Left ventricle myocardium superior (tissue), 1 donor: ENCODE measurements at regions of chr12 and their contacts with region 1.

Region 1: GRCh38 chr12:2034633-2035430 is 18.0 kb upstream of the CACNA1C start:
- DNase-seq: peak; percentile 96
- ATAC-seq: peak; percentile 76

Region 2: GRCh38 chr12:1804545-1805332 is 230.1 kb before region 1 on chr12:
- intact Hi-C with region 1: loop called (anchors 10 kb)
- DNase-seq: peak; percentile 91
- ATAC-seq: peak; percentile 78

Region 3: GRCh38 chr12:1949771-1950470 is 84.9 kb before region 1 on chr12:
- intact Hi-C with region 1: no loop called
- DNase-seq: no peak
- ATAC-seq: peak; percentile 81